A673 (cell line): ENCODE measurements at regions of chr5 and their contacts with region 1.

Region 1: GRCh38 chr5:61933787-61934626 is 372.0 kb upstream of the KIF2A start:
- DNase-seq: peak; percentile 83
- H3K4me3 ChIP-seq: no peak overlapping the region
- H3K27ac ChIP-seq: peak overlapping the region; percentile 30
- H3K4me1 ChIP-seq: peaks cover 8% of the 10 kb centered on the region
- H3K27me3 ChIP-seq: no peaks in the 10 kb centered on the region
- CTCF ChIP-seq: peak; percentile 78

Region 2: DNA sequence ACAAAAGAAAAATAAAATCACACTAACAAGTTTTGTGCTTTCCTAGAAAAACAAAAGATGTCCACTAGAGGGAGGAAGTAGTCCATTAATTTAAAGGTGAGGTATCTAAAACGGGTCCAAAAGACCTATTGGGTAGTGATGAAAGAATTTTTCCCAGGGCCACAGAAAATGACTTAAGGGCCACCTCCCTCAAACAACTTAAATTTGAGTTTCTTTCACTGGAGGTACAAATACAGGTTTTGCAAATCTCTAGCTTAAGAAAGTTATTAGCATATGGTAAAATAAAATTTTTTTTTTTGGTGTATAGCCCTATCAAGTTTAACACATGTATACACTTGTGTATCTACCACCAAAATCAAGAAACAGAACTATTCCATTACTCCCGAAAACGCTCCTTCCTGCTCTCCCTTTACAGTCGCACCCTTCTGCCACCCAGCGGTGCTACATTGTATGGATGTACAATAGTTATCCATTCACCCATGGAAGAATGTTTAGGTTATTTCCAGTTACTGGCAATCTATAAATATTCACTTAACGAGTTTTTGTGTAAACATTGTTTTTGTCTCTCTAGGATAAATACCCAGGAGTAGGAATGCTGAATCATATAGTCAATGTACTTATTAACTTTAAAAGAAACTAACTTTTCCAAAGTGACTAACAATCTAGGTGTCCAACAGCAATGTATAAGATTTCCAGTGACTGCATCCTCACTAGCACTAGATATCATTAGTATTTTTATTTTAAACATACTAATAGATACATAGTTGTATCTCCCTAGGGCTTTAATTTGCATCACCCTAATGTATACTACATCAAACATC is 1256.0 kb before region 1 on chr5:
- CTCF ChIA-PET with region 1: no interaction called
- POLR2A ChIA-PET with region 1: no interaction called
- intact Hi-C with region 1: loop called (anchors 10 kb)
- DNase-seq: peak; percentile 46
- H3K4me3 ChIP-seq: no peak overlapping the region
- H3K27ac ChIP-seq: no peak overlapping the region
- H3K4me1 ChIP-seq: peaks cover 3% of the 10 kb centered on the region
- H3K27me3 ChIP-seq: no peaks in the 10 kb centered on the region
- CTCF ChIP-seq: peak; percentile 62

Region 3: DNA sequence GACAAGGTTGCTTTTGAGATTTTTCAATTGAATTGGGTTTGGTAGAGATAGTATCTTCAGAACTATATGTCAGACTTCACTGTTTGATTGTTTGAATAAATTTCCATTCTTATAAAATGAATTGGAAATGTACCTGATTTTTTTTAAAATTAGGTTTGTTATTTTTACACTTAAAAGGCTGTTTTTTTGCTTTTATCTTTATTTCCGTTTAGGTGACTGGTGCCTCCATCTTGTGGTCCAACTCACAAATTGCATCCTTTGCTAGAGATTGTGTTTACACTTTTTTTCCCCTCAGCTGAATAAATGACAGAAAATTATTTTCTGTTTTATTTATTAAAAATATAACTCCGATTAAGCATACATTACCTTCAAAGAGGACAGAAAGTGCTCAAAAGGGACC is 973.4 kb before region 1 on chr5:
- CTCF ChIA-PET with region 1: interaction called, 3 read pairs
- POLR2A ChIA-PET with region 1: interaction called, 4 read pairs
- intact Hi-C with region 1: loop called (anchors 2 kb)
- DNase-seq: peak; percentile 43
- H3K4me3 ChIP-seq: no peak overlapping the region
- H3K27ac ChIP-seq: no peak overlapping the region
- H3K4me1 ChIP-seq: peaks cover 22% of the 10 kb centered on the region
- H3K27me3 ChIP-seq: no peaks in the 10 kb centered on the region
- CTCF ChIP-seq: peak; percentile 75

Region 4: DNA sequence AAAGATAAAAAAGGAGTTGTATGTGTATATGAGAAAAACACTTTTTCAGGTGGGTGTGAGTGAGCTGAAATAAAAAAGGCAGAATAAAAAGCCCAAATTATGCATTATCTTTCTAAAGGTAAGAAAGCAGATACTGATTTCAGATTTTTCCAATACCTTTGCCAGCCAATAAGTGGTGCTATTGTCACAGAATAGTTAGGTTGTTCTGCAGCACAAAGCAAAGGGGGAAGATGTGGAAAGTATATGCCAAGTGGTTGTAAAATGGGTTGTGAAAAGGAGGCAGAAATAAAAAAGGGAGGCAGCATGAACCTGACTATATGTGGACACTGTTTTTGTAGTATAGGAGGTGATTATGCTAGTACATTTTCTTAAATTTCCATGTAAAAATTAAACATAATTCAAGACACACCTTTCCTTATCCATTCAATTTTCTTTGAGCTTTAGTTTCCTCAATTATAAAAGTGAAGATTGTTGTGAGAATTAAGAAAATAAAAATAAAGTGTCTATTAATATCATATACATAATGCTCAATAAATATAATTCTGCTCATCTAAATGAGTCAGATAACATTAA is 878.5 kb before region 1 on chr5:
- CTCF ChIA-PET with region 1: no interaction called
- POLR2A ChIA-PET with region 1: no interaction called
- intact Hi-C with region 1: loop called (anchors 2 kb)
- DNase-seq: peak; percentile 75
- H3K4me3 ChIP-seq: no peak overlapping the region
- H3K27ac ChIP-seq: no peak overlapping the region
- H3K4me1 ChIP-seq: peaks cover 24% of the 10 kb centered on the region
- H3K27me3 ChIP-seq: no peaks in the 10 kb centered on the region
- CTCF ChIP-seq: peak; percentile 75

Region 5: GRCh38 chr5:61162010-61162831 is 771.8 kb before region 1 on chr5 and contains the start of gene SMIM15:
- CTCF ChIA-PET with region 1: no interaction called
- POLR2A ChIA-PET with region 1: no interaction called
- intact Hi-C with region 1: loop called (anchors 5 kb)
- DNase-seq: peak; percentile 93
- H3K4me3 ChIP-seq: peak within 1 kb of the TSS; percentile 98
- H3K27ac ChIP-seq: peak within 1 kb of the TSS; percentile 95
- H3K4me1 ChIP-seq: peaks cover 26% of the 10 kb centered on the region
- H3K27me3 ChIP-seq: no peaks in the 10 kb centered on the region
- CTCF ChIP-seq: no peak
- total RNA-seq, gene SMIM15: 78.7 and 93.5 TPM in 2 replicates

Region 6: GRCh38 chr5:61319388-61320146 is 614.4 kb before region 1 on chr5:
- CTCF ChIA-PET with region 1: no interaction called
- POLR2A ChIA-PET with region 1: no interaction called
- intact Hi-C with region 1: loop called (anchors 10 kb)
- DNase-seq: peak; percentile 90
- H3K4me3 ChIP-seq: peak overlapping the region; percentile 28
- H3K27ac ChIP-seq: peak overlapping the region; percentile 78
- H3K4me1 ChIP-seq: peaks cover 23% of the 10 kb centered on the region
- H3K27me3 ChIP-seq: no peaks in the 10 kb centered on the region
- CTCF ChIP-seq: no peak

Region 7: DNA sequence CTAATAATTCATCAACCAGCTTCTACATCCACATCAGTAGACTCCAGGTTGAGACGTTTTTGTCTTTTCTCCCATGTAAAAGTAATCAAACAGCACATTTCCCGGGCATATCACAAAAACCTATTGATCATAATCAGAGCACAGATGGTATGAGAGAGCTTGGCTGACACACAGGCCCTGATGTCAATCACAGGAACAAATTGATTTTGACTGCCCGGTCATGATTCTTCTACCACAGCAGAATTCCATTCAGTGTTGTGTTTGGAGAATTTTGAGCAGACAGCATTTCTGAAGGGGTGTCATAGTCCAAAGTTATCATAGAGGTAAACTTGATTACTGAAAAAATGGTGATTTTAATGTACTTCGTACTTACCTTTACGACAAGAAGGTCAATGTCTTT is 250.9 kb before region 1 on chr5:
- CTCF ChIA-PET with region 1: interaction called, 6 read pairs
- POLR2A ChIA-PET with region 1: no interaction called
- intact Hi-C with region 1: loop called (anchors 1 kb)
- DNase-seq: peak; percentile 62
- H3K4me3 ChIP-seq: no peak overlapping the region
- H3K27ac ChIP-seq: peak overlapping the region; percentile 96
- H3K4me1 ChIP-seq: peaks cover 43% of the 10 kb centered on the region
- H3K27me3 ChIP-seq: no peaks in the 10 kb centered on the region
- CTCF ChIP-seq: no peak

Region 8: DNA sequence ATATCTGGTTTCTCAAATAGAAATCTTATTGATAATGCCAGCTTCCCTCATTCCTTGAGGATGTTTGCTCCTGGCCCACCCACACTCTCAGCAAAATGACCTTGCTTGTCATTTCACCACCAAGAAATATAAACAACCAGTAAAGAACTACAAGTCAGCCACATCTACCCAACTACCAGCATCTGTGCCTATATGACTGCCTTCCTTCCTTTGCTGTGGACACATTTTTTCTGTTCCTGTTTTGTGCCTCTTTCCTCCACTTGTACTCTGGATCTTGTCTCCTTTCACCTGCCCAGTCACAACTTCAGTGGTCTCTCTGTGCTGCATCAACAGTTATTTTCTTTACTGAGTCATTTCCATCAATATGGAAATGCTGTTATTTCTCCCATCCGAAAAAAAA is 392.3 kb after region 1 on chr5:
- CTCF ChIA-PET with region 1: no interaction called
- POLR2A ChIA-PET with region 1: no interaction called
- intact Hi-C with region 1: no loop called
- DNase-seq: no peak
- H3K4me3 ChIP-seq: no peak overlapping the region
- H3K27ac ChIP-seq: no peak overlapping the region
- H3K4me1 ChIP-seq: peaks cover 12% of the 10 kb centered on the region
- H3K27me3 ChIP-seq: no peaks in the 10 kb centered on the region
- CTCF ChIP-seq: no peak